ENCODE measurements at regions of chr12 and their contacts with region 1.

Region 1: GRCh38 chr12:19181666-19182426 is 52.3 kb downstream of the PLEKHA5 start:
- DNase-seq: no peak
- ATAC-seq: no peak

Region 2: GRCh38 chr12:19129486-19130223 is 52.2 kb before region 1 on chr12 and contains the start of gene PLEKHA5:
- intact Hi-C with region 1: loop called (anchors 5 to 10 kb)
- DNase-seq: peak; percentile 80
- ATAC-seq: peak; percentile 95
- total RNA-seq, gene PLEKHA5: 36.9 to 53.4 TPM

Region 3: DNA sequence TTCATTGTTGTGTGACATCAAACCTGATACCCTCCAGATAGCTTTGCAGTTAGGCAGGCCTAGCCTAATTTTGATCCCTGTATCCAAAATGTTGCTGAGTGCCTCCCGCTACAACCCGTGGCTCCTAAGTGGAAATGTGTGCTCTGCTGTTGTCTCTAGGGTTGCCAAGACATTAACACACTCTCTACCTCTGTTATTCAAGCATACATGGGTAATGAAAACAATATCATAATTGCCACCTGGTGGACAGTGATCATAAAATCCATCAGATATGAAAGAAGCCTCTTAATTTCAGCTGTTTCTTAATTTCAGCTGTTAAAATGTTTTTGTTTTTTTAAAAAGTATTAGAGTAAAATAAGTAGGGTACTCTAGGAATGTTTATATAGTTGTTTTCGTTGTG is 41.2 kb after region 1 on chr12:
- intact Hi-C with region 1: no loop called
- DNase-seq: no peak
- ATAC-seq: peak; percentile 65 to 69

Measured in left cardiac atrium (tissue), 4 donors.